ENCODE measurements at regions of chr7 and their contacts with region 1.

Region 1: DNA sequence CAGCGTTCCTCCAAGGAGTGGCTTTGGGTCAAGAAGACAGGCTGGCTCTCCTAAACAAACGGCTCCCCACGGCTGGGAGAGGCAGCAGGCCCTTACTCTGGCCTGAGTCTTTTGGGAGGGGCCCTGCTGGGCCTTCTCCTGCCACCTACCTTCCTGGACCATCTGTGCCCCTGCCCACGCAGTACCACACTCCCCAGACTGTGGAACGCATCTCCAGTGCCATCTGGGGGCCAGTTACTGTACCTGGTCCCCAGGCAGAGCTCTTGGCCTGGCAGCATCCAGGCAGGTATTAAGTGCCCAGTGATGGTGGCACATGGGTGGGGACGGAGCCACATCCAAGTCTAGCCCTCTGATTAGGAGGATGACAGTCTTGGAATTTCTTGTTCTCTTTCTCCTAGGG is 14.4 kb downstream of the ALKBH4 start:
- DNase-seq: no peak
- ATAC-seq: peak; percentile 79
- H3K4me3 ChIP-seq: no peak overlapping the region
- H3K27ac ChIP-seq: no peak overlapping the region
- H3K4me1 ChIP-seq: peaks cover 6 to 19% of the 10 kb centered on the region in 2 experiments
- H3K27me3 ChIP-seq: no peaks in the 10 kb centered on the region
- CTCF ChIP-seq: peak; percentile 46 to 67 (median 50); a peak in 5 of 6 replicates
- POLR2A ChIP-seq: no peak
- RAD21 ChIP-seq: peak; percentile 81

Region 2: DNA sequence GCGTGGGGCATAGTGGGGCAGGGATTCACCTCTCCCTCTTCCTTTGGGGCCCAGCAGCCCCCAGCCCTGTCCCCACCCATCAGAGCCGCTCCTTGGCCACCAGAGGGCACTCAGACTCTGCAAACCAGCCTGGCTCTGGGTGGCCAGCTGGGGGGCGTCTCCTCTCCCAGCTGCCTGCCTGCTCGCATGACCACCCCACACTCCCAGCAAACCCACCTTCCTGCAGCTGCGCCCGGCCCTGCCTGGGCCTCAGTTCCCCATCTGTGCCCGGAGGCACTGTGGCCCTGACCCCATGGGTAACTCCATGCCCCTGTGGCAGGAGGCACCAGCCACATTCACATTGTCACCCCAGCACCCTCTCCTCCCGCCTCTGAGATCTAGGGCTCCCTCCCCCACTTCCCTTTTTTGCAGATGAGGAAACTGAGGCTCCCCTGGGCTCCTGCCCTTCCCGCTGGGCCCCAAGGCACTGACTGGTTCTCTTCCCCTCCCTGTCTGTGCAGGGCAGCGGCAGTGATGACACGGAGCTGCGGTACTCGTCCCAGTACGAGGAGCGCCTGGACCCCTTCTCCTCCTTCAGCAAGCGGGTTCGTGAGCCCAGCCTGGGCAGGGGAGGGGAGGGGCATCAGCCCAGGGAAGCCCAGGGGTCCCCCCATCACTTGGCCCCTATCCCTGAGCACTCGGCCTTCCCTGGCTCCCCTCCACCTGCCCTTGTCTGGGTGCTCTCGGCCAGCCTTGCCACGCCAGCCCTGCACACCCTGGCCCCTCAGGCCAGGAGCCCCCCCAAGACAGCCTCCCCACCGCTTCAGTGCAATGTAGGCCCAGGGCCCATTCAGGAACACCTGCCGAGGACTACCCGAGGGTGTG is 170.5 kb before region 1 on chr7:
- CTCF ChIA-PET with region 1: interaction called, 3 read pairs
- POLR2A ChIA-PET with region 1: no interaction called
- RAD21 ChIA-PET with region 1: no interaction called
- intact Hi-C with region 1: loop called (anchors 5 kb)
- DNase-seq: peak; percentile 27
- ATAC-seq: peak; percentile 94
- H3K4me3 ChIP-seq: no peak overlapping the region
- H3K27ac ChIP-seq: no peak overlapping the region
- H3K4me1 ChIP-seq: peaks cover 4 to 12% of the 10 kb centered on the region in 2 experiments; a peak in 3 of 4 replicates
- H3K27me3 ChIP-seq: no peaks in the 10 kb centered on the region
- CTCF ChIP-seq: peak in 2 of 3 experiments; percentile 91 to 92; a peak in 4 of 6 replicates
- POLR2A ChIP-seq: no peak
- RAD21 ChIP-seq: no peak

Region 3: GRCh38 chr7:102321351-102322177 is 128.7 kb before region 1 on chr7:
- CTCF ChIA-PET with region 1: no interaction called
- POLR2A ChIA-PET with region 1: no interaction called
- RAD21 ChIA-PET with region 1: no interaction called
- intact Hi-C with region 1: no loop called
- DNase-seq: no peak
- ATAC-seq: no peak
- H3K4me3 ChIP-seq: no peak overlapping the region
- H3K27ac ChIP-seq: no peak overlapping the region
- H3K4me1 ChIP-seq: peaks cover 9 to 10% of the 10 kb centered on the region in 2 experiments
- H3K27me3 ChIP-seq: no peaks in the 10 kb centered on the region
- CTCF ChIP-seq: no peak
- POLR2A ChIP-seq: no peak
- RAD21 ChIP-seq: no peak

Region 4: DNA sequence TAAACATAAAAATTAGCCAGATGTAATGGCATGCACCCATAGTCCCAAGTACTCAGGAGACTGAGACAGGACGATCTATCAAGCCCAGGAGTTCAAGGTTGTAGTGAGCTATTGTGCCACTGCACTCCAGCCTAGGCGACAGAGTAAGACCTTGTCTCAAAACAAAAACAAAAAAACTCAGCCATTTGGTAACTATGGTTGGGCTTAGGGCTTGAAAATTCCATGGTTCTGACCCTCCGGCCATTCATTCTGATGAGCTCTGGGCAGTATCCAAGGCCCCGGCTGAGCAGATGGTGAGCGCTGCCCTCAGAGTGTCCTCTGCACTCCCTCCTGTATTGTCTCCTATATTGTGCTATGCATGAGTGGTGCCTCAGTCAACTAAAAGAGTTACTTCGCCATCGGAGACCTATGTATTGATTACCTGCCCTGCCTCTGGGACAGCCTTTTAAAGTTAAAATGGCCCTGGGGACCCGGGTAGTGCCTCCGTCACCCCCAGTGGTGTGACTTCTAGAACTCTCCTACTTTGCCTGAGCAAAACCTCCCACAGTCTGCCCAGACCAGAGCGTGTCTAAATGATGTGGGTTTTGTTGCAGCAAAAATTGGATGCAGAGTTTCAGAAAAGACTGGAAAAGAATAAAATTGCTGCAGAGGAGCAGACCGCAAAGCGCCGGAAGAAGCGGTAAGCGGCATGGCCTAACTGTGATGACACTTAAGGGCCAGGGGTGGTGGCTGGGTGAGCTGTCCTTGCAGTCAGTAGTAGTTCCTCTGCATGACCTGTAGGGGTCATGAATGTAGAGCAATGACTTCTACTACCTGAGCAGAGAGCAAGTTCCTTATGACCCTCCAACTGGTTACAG is 46.0 kb before region 1 on chr7:
- CTCF ChIA-PET with region 1: interaction called, 4 read pairs
- POLR2A ChIA-PET with region 1: no interaction called
- RAD21 ChIA-PET with region 1: interaction called in 1 of 2 experiments, 5 read pairs
- intact Hi-C with region 1: loop called (anchors 1 kb)
- DNase-seq: peak; percentile 35
- ATAC-seq: peak; percentile 99
- H3K4me3 ChIP-seq: no peak overlapping the region
- H3K27ac ChIP-seq: no peak overlapping the region
- H3K4me1 ChIP-seq: no peaks in the 10 kb centered on the region
- H3K27me3 ChIP-seq: no peaks in the 10 kb centered on the region
- CTCF ChIP-seq: peak; percentile 47 to 74 (median 64); a peak in 5 of 6 replicates
- POLR2A ChIP-seq: no peak
- RAD21 ChIP-seq: peak; percentile 69

Region 5: DNA sequence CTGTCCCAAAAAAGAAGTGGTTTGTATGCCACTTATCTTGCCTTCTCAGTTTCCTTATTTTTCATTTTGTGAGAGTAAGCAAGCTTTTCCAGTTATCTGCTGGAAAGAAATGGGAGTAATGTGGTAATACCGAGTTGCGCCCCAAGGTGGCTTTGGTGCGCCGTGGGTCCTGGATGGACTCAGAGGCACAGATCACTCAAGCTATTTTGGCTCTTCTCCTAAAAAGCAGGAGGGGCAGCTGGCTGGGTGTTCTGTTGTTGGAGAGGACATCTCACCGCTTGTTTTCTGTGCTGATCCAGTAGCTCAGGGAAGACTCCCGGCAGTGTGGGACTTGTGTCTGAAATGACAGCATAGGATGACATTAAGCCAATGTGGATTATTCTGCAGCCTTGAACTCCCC is 37.7 kb before region 1 on chr7:
- CTCF ChIA-PET with region 1: interaction called, 14 read pairs
- POLR2A ChIA-PET with region 1: no interaction called
- RAD21 ChIA-PET with region 1: no interaction called
- intact Hi-C with region 1: loop called (anchors 1 kb)
- DNase-seq: no peak
- ATAC-seq: peak; percentile 81
- H3K4me3 ChIP-seq: no peak overlapping the region
- H3K27ac ChIP-seq: no peak overlapping the region
- H3K4me1 ChIP-seq: no peaks in the 10 kb centered on the region
- H3K27me3 ChIP-seq: no peaks in the 10 kb centered on the region
- CTCF ChIP-seq: peak; percentile 33 to 64 (median 54); a peak in 5 of 6 replicates
- POLR2A ChIP-seq: no peak
- RAD21 ChIP-seq: peak; percentile 72